Left cardiac atrium (tissue), 4 donors: ENCODE measurements at regions of chr18 and their contacts with region 1.

Region 1: GRCh38 chr18:21361307-21361880 is 119.4 kb downstream of the GREB1L start:
- DNase-seq: no peak
- ATAC-seq: peak; percentile 27 to 37

Region 2: GRCh38 chr18:21303913-21304312 is 57.5 kb before region 1 on chr18:
- intact Hi-C with region 1: loop called in 1 of 2 experiments (anchors 10 kb)
- DNase-seq: no peak
- ATAC-seq: no peak

Region 3: GRCh38 chr18:22020127-22020866 is 658.9 kb after region 1 on chr18:
- intact Hi-C with region 1: no loop called
- DNase-seq: no peak
- ATAC-seq: no peak